Naive thymus-derived CD4-positive, alpha-beta T cell (primary cell): ENCODE measurements at regions of chr6 and their contacts with region 1.

Region 1: DNA sequence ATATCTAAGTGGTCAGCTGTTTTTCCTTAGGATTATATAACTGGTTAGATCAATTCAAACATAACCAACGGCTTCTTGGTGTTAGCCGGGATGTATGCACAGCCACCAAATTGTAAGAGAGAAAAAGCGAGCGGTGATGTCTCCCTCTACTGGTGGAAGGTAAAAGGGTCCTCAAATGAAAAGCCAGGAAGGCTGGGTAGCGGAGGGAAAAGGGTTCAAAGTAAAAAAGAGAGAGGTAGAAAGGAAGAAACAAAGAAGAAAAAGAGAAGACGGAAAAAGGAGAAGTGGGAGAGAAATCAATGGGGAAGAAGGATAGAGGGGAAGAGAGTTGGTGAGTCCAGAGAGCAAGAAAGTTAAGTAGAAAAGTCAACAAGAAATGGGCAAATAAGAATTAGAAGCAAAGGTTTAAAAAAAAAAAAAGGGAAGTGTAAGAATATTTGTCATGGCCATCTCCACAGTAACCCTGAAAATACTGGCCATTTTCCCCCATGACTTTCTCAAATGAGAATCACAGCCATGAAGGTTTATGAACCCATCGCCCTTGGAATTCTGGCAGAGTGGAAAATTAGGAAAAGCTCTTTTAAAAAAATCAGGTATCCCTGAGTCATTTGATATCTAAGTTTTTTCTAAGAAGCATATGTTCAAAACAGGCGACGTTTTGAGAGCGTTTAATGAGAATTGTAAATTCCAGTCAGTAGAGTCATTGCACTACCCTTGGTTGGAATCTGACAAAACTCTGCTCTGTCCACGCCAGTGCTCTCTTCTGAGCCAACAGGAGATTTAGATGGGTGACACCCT is 155.6 kb upstream of the SNX9 start:
- DNase-seq: peak in 8 of 9 donors; percentile 28 to 67 (median 54)
- ATAC-seq: peak; percentile 83
- H3K4me3 ChIP-seq: no peak overlapping the region
- H3K4me3 Mint-ChIP-seq: peak overlapping the region in 4 of 10 donors; percentile 1 to 35 (median 10)
- H3K27ac ChIP-seq: no peak overlapping the region
- H3K27ac Mint-ChIP-seq: peak overlapping the region in 7 of 9 donors; percentile 4 to 38 (median 19)
- H3K4me1 ChIP-seq: peaks cover 0 to 15% of the 10 kb centered on the region in 2 donors
- H3K4me1 Mint-ChIP-seq: peaks cover 7 to 31% (median 23%) of the 10 kb centered on the region in 7 donors
- H3K27me3 ChIP-seq: no peaks in the 10 kb centered on the region
- H3K27me3 Mint-ChIP-seq: peaks cover 0 to 6% (median 0%) of the 10 kb centered on the region in 5 donors

Region 2: DNA sequence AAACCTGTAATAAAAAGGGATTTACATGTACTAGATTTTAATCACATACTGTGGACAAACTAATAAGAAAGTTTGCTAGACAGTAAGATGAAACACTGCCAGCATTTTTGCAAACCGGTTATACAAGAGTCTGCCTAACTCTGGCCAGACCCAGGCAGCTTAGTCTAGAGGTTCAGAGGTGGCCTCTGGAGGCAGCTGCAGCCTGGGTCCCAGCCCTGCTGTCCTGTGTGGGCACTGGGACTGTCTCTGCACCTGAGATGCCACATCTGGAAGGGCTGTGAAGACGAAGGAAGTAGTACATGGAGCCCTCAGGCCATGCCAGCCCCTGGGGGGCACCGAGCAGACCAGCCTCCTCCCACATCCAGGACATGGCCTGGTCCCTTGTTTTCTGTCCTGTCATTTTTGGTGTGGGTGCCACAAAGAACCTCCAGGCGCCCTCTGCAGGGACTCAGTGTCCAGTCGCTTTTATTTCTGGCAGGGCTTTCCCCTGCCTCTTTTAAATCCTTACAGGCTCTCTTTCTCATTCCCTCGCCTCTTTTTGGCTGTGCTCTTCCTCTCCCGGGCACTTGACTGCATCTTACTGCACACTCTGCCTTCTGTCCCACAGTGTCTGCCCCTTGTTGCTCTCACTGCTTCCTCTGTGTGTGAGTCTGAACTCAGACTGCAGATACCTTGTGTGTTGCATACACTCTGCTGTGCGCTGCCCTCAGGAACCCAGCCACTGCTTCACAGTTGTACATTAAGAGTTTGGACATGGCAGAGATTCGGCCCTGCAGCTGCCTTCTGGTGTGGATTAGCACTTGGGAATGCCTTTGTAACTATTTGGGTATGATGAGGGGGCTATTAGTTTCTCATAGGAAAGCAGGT is 69.7 kb before region 1 on chr6:
- CTCF ChIA-PET with region 1: no interaction called
- POLR2A ChIA-PET with region 1: no interaction called
- intact Hi-C with region 1: loop called in 1 of 2 experiments (anchors 5 kb)
- DNase-seq: peak in 4 of 9 donors; percentile 8 to 27 (median 18)
- ATAC-seq: peak; percentile 56
- H3K4me3 ChIP-seq: no peak overlapping the region
- H3K4me3 Mint-ChIP-seq: no peak overlapping the region
- H3K27ac ChIP-seq: no peak overlapping the region
- H3K27ac Mint-ChIP-seq: no peak overlapping the region
- H3K4me1 ChIP-seq: no peaks in the 10 kb centered on the region
- H3K4me1 Mint-ChIP-seq: peaks cover 0 to 6% (median 0%) of the 10 kb centered on the region in 7 donors
- H3K27me3 ChIP-seq: no peaks in the 10 kb centered on the region
- H3K27me3 Mint-ChIP-seq: no peaks in the 10 kb centered on the region

Region 3: DNA sequence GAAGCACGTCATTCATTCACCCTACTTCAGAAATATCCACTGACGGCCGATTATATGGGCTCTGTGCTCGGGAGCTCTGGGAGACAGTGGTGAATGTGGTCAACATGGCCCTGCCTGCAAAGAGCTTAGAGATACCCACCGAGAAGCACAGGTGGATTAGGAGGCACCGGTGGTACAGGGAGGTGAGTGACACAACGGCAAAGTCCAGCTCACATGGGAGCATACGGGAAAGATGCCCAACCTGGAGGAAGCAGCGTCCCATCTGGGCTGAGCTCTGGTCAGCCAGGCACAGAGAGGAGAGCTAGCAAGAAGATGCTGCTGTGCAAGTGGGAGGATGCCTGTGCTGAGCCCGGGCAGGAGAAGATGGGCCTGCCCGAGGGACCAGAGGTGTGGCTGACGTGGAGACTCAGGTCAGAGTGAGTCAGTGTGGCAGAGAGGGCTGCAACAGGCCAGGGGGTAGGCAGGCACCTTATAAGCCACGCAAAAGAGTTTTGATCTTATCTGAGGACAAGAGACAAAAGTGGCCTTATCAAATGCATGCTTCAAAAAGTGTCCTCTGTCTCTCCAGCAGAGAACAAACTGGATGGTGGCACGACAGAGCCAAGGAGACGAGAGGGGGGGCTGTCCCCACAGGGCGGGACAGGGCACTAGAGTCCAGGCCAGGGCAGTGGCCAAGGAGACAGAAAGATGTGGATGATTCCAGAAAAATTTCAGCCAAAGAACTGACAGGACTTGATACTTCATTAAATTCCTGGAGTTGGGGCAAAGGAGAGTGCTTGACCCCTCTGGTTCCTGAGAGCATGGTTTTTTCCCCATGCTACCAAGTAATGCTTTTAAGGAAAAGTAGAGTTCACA is 59.0 kb before region 1 on chr6:
- CTCF ChIA-PET with region 1: no interaction called
- POLR2A ChIA-PET with region 1: no interaction called
- intact Hi-C with region 1: no loop called
- DNase-seq: no peak
- ATAC-seq: no peak
- H3K4me3 ChIP-seq: no peak overlapping the region
- H3K4me3 Mint-ChIP-seq: no peak overlapping the region
- H3K27ac ChIP-seq: no peak overlapping the region
- H3K27ac Mint-ChIP-seq: peak overlapping the region in 1 of 9 donors; percentile 63
- H3K4me1 ChIP-seq: no peaks in the 10 kb centered on the region
- H3K4me1 Mint-ChIP-seq: peaks cover 0 to 9% (median 0%) of the 10 kb centered on the region in 7 donors
- H3K27me3 ChIP-seq: no peaks in the 10 kb centered on the region
- H3K27me3 Mint-ChIP-seq: peaks cover 0 to 2% (median 0%) of the 10 kb centered on the region in 5 donors

Region 4: DNA sequence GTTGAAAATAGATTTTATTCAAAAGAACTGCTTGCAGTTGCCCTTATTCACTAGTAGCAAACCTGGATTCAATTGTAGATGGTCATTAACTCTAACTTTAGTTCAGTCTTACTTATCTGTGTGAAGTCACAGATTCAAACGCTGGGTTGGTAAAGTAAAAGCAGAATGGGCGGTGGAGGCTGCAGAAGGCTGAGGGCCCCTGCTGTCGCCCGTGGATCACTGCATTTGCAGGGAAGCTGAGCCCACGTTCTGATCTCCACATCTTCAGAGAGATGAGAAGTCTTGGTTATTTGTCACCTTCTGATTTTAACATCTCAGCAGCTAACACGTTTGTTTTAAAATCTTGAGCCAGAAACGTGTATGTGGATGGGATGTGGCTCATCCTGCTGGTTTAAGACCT is 230.8 kb after region 1 on chr6:
- CTCF ChIA-PET with region 1: no interaction called
- POLR2A ChIA-PET with region 1: no interaction called
- intact Hi-C with region 1: loop called in 1 of 2 experiments (anchors 2 kb)
- DNase-seq: peak in 7 of 9 donors; percentile 39 to 68 (median 48)
- ATAC-seq: peak; percentile 55
- H3K4me3 ChIP-seq: no peak overlapping the region
- H3K4me3 Mint-ChIP-seq: no peak overlapping the region
- H3K27ac ChIP-seq: no peak overlapping the region
- H3K27ac Mint-ChIP-seq: peak overlapping the region in 8 of 9 donors; percentile 6 to 92 (median 50)
- H3K4me1 ChIP-seq: peaks cover 0 to 12% of the 10 kb centered on the region in 2 donors
- H3K4me1 Mint-ChIP-seq: peaks cover 5 to 40% (median 26%) of the 10 kb centered on the region in 7 donors
- H3K27me3 ChIP-seq: no peaks in the 10 kb centered on the region
- H3K27me3 Mint-ChIP-seq: no peaks in the 10 kb centered on the region

Region 5: DNA sequence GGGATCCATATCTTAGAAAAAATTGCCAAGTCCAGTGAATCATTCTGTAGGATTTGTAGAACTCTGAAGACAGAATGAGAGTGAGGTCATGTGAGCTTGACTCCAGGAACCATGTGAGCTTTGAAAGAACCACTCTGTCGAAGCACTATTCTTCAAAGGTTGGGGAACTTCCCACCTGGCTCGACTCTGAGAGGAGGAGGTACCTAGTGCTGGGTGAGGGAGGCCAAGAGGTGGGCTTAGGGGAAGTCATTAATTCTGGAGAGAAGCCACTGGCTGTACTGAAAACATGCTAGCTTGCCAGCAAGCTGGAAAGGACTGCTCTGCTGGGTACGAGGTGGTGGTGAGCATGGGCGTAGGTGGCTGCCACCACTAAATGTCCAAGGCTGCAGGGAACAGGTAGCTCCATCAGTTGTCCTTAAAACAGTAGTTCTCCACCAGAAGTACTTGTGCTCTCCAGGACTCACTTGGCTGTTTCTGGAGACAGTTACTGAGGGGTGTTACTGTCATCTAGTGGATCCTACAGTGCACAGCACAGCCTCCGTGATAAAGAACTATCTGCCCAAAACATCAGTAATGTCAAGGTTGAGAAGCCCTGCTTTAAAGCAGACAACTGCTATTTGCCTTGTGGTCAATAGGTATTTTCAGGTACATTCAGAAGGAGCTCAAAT is 279.6 kb after region 1 on chr6:
- CTCF ChIA-PET with region 1: interaction called, 4 read pairs
- POLR2A ChIA-PET with region 1: no interaction called
- intact Hi-C with region 1: loop called in 1 of 2 experiments (anchors 5 kb)
- DNase-seq: peak in 6 of 9 donors; percentile 11 to 51 (median 32)
- ATAC-seq: peak; percentile 72
- H3K4me3 ChIP-seq: no peak overlapping the region
- H3K4me3 Mint-ChIP-seq: peak overlapping the region in 1 of 10 donors; percentile 42
- H3K27ac ChIP-seq: no peak overlapping the region
- H3K27ac Mint-ChIP-seq: peak overlapping the region in 8 of 9 donors; percentile 8 to 88 (median 52)
- H3K4me1 ChIP-seq: no peaks in the 10 kb centered on the region
- H3K4me1 Mint-ChIP-seq: peaks cover 0 to 24% (median 5%) of the 10 kb centered on the region in 7 donors
- H3K27me3 ChIP-seq: no peaks in the 10 kb centered on the region
- H3K27me3 Mint-ChIP-seq: peaks cover 0 to 20% (median 0%) of the 10 kb centered on the region in 5 donors

Region 6: DNA sequence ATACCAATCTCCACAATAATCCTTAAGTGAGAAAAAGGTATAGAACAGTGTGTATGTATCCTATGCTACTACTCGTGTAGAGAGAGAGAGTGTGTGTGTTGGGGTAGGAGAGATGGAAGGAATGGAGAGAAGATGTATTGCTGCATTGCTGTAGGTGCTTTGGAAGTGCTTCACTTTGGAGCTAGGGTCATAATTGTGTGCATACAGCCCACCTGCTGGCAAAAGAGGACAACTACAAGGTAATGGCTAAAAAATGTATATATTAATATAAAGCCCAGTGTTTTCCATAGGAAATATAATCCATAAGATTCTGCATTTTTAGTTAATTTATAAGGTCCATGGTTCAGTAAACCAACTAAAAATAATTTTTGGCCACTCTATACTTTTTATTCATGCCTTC is 464.5 kb after region 1 on chr6:
- CTCF ChIA-PET with region 1: no interaction called
- POLR2A ChIA-PET with region 1: no interaction called
- intact Hi-C with region 1: loop called in 1 of 2 experiments (anchors 1 kb)
- DNase-seq: peak in 1 of 9 donors; percentile 10
- ATAC-seq: peak; percentile 62
- H3K4me3 ChIP-seq: no peak overlapping the region
- H3K4me3 Mint-ChIP-seq: no peak overlapping the region
- H3K27ac ChIP-seq: no peak overlapping the region
- H3K27ac Mint-ChIP-seq: no peak overlapping the region
- H3K4me1 ChIP-seq: no peaks in the 10 kb centered on the region
- H3K4me1 Mint-ChIP-seq: no peaks in the 10 kb centered on the region
- H3K27me3 ChIP-seq: no peaks in the 10 kb centered on the region
- H3K27me3 Mint-ChIP-seq: no peaks in the 10 kb centered on the region